ENCODE measurements at regions of chr11 and their contacts with region 1.

Region 1: GRCh38 chr11:78338138-78338537 is 79.5 kb downstream of the GAB2 start:
- H3K4me3 Mint-ChIP-seq: no peak overlapping the region
- H3K27ac Mint-ChIP-seq: peak overlapping the region; percentile 85
- H3K4me1 Mint-ChIP-seq: peaks cover 81% of the 10 kb centered on the region
- H3K27me3 Mint-ChIP-seq: no peaks in the 10 kb centered on the region

Region 2: DNA sequence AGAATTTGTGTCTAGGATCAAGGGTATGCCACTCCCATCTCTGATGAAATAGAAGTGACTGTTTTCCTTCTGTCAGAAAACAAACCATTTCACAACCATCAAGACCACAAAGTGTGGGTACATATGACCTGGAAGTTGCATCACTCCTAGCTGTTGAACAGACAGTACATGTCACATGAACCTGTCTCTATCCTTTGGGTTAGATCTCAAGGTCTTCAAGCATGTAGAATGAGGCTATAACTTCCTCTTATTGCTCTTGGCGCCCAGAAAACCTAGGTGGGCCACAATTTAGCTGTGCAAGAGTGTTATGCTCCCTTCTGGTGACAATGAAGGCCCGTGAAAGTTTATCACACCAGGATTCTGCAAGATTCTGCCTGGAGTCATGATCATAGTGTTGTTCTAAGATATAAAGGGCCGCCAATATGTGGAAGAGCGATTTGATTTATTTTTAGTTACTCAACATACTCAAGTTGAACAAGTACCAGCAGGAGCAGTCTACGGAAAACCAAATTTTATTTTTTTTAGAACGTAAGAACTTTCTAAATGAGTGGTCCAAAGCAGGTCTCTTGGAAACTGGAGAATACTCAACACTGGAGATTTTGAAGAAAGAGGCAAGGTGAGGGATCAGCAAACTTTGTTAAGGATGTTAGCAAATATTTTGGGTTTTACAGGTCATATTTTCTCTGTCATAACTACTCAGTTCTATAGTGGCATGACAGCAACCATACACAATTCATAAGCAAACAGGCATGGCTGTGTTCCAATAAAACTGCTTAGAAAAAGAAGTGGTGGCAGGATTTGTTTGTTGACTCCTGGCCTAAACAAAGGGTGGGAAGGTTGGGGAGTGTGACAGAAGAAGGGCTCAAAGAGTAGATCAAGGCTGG is 47.6 kb before region 1 on chr11:
- intact Hi-C with region 1: loop called (anchors 5 kb)
- H3K4me3 Mint-ChIP-seq: peak overlapping the region; percentile 53
- H3K27ac Mint-ChIP-seq: peak overlapping the region; percentile 85
- H3K4me1 Mint-ChIP-seq: peaks cover 69% of the 10 kb centered on the region
- H3K27me3 Mint-ChIP-seq: no peaks in the 10 kb centered on the region

Measured in dendritic cell treated with granulocyte-macrophage colony-stimulating factor and Interleukin-4, amounts not matched to agents 40 ng/mL and 50 ng/mL, for 4 days (primary cell).